ENCODE measurements at regions of chr15 and their contacts with region 1.

Region 1: GRCh38 chr15:78638658-78639314 is 2.2 kb downstream of the CHRNB4 start:
- DNase-seq: peak in 1 of 2 donors; percentile 49
- ATAC-seq: peak; percentile 35 to 75 (median 66)
- H3K4me3 ChIP-seq: no peak overlapping the region
- H3K27ac ChIP-seq: no peak overlapping the region
- H3K4me1 ChIP-seq: peaks cover 8 to 20% (median 12%) of the 10 kb centered on the region in 9 donors
- H3K27me3 ChIP-seq: peaks cover 5 to 37% (median 24%) of the 10 kb centered on the region in 7 donors
- CTCF ChIP-seq: peak; percentile 32 to 74 (median 67)

Region 2: DNA sequence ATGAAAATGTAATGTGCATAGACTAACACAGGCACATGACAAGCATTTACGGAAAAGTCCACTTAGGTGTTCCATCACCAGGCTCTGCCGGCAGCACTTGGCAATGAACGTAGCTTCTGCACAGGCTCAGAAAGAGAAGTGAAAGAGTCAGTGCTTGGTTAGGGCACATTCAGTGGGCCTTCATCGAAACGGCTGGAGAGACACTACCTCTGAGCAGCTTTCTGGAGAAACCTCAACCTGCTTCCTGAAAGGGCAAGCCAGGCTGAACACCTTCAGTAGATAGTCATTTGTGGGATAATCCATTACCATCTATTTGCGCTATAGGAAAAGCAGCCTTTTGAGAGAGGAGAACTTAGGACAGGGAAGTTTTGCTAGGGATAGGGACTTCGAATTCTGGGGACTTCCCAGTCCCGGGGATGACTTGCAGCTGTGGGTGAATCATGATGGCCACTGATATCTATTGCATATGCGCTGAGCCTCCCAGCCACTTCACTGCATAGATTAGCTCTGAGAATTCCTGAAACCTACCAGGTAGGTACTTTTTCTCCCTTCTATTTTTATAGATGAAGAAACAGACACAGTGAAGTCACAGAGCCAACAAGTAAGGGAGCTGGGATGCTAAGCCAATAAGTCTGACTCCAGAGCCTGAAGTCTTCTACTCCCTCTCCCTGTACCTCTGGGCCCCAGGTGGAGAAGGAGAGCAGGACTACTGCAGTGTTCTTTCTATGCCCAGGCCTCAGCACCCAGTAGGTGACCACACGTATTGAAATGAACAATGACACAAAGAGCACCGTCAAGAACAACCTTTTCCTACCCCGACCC is 550.6 kb before region 1 on chr15:
- intact Hi-C with region 1: no loop called
- DNase-seq: no peak
- ATAC-seq: peak in 1 of 8 donors; percentile 13
- H3K4me3 ChIP-seq: no peak overlapping the region
- H3K27ac ChIP-seq: peak overlapping the region in 1 of 10 donors; percentile 51
- H3K4me1 ChIP-seq: peaks cover 9 to 44% (median 21%) of the 10 kb centered on the region in 9 donors
- H3K27me3 ChIP-seq: no peaks in the 10 kb centered on the region
- CTCF ChIP-seq: no peak

Region 3: GRCh38 chr15:78308422-78309032 is 330.3 kb before region 1 on chr15:
- intact Hi-C with region 1: no loop called
- DNase-seq: peak; percentile 52 to 59
- ATAC-seq: peak; percentile 61 to 91 (median 81)
- H3K4me3 ChIP-seq: no peak overlapping the region
- H3K27ac ChIP-seq: no peak overlapping the region
- H3K4me1 ChIP-seq: peaks cover 0 to 9% (median 0%) of the 10 kb centered on the region in 9 donors
- H3K27me3 ChIP-seq: peaks cover 0 to 30% (median 7%) of the 10 kb centered on the region in 7 donors
- CTCF ChIP-seq: peak; percentile 54 to 89 (median 82)

Region 4: DNA sequence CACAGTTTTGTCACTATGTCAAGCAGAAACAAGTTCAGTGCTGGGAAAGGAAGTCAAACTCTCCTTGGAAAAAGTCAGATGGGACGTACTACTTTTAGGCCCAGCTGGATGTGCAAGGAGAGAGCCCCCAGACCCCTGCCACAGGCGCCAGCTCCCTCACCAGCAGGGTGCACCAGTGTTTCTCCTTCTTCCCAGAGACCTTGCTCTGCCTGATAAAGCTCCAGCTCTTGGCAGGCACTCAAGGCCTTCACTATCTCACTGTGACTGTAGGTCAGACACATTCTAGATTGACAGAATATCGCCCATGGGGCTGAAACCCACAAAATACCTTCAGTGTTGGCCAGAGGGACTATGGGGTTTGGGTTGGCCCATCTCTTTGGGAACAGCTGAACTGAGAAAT is 57.1 kb after region 1 on chr15:
- intact Hi-C with region 1: loop called in 1 of 10 experiments (anchors 10 kb)
- DNase-seq: no peak
- ATAC-seq: peak in 4 of 8 donors; percentile 50 to 66 (median 58)
- H3K4me3 ChIP-seq: no peak overlapping the region
- H3K27ac ChIP-seq: no peak overlapping the region
- H3K4me1 ChIP-seq: peaks cover 0 to 4% (median 0%) of the 10 kb centered on the region in 9 donors
- H3K27me3 ChIP-seq: no peaks in the 10 kb centered on the region
- CTCF ChIP-seq: peak in 2 of 9 donors; percentile 24 to 32

Region 5: GRCh38 chr15:78709263-78709882 is 70.6 kb after region 1 on chr15:
- intact Hi-C with region 1: loop called in 8 of 10 experiments (anchors 2 to 5 kb)
- DNase-seq: peak; percentile 58 to 71
- ATAC-seq: peak; percentile 83 to 95 (median 92)
- H3K4me3 ChIP-seq: no peak overlapping the region
- H3K27ac ChIP-seq: no peak overlapping the region
- H3K4me1 ChIP-seq: peaks cover 0 to 8% (median 0%) of the 10 kb centered on the region in 9 donors
- H3K27me3 ChIP-seq: peaks cover 0 to 34% (median 11%) of the 10 kb centered on the region in 7 donors
- CTCF ChIP-seq: peak; percentile 80 to 92 (median 89)

Region 6: GRCh38 chr15:78714890-78715289 is 76.1 kb after region 1 on chr15:
- intact Hi-C with region 1: loop called in 2 of 10 experiments (anchors 5 kb)
- DNase-seq: no peak
- ATAC-seq: no peak
- H3K4me3 ChIP-seq: no peak overlapping the region
- H3K27ac ChIP-seq: no peak overlapping the region
- H3K4me1 ChIP-seq: no peaks in the 10 kb centered on the region
- H3K27me3 ChIP-seq: peaks cover 0 to 22% (median 2%) of the 10 kb centered on the region in 7 donors
- CTCF ChIP-seq: no peak

Region 7: GRCh38 chr15:78996894-78997275 is 358.1 kb after region 1 on chr15:
- intact Hi-C with region 1: loop called in 1 of 10 experiments (anchors 5 kb)
- DNase-seq: no peak
- ATAC-seq: no peak
- H3K4me3 ChIP-seq: no peak overlapping the region
- H3K27ac ChIP-seq: no peak overlapping the region
- H3K4me1 ChIP-seq: peaks cover 0 to 7% (median 0%) of the 10 kb centered on the region in 9 donors
- H3K27me3 ChIP-seq: no peaks in the 10 kb centered on the region
- CTCF ChIP-seq: no peak

Region 8: DNA sequence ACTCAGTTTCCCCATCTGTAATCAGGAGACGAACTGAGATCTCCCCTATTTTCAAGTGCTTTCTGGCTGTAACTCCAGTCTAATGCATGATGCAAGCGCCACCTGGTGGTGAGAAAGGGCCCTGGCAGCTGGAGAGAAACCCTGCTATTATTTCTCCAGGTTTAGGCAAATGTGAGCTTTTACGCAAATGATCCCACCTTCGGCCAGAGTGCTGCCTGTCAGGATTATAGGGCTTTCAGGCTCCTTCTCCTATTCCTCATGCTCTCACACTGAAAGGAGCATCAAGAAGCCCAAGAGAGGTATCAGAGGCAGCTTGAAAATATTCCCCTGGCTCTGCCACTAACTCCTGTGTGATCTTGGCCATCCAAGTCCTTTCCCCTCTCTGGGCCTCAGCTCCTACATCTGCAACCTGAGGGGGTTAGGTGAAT is 545.7 kb after region 1 on chr15:
- intact Hi-C with region 1: loop called in 1 of 10 experiments (anchors 10 kb)
- DNase-seq: peak; percentile 67 to 75
- ATAC-seq: peak in 3 of 8 donors; percentile 38 to 82 (median 55)
- H3K4me3 ChIP-seq: no peak overlapping the region
- H3K27ac ChIP-seq: no peak overlapping the region
- H3K4me1 ChIP-seq: no peaks in the 10 kb centered on the region
- H3K27me3 ChIP-seq: peaks cover 0 to 20% (median 0%) of the 10 kb centered on the region in 7 donors
- CTCF ChIP-seq: peak; percentile 89 to 99 (median 97)

Measured in heart right ventricle (tissue), 16 donors.